CD4-positive, alpha-beta memory T cell (primary cell): ENCODE measurements at regions of chr12 and their contacts with region 1.

Region 1: GRCh38 chr12:9707864-9708808 is 24.8 kb downstream of the CLECL1 start:
- DNase-seq: peak; percentile 72 to 75 (median 74)
- H3K4me3 ChIP-seq: peak overlapping the region; percentile 4 to 29
- H3K4me3 Mint-ChIP-seq: peak overlapping the region; percentile 60 to 82 (median 77)
- H3K27ac ChIP-seq: peak overlapping the region; percentile 66
- H3K27ac Mint-ChIP-seq: peak overlapping the region; percentile 87 to 97 (median 96)
- H3K4me1 ChIP-seq: peaks cover 44% of the 10 kb centered on the region
- H3K4me1 Mint-ChIP-seq: peaks cover 47 to 59% (median 49%) of the 10 kb centered on the region in 4 donors
- H3K27me3 ChIP-seq: no peaks in the 10 kb centered on the region
- H3K27me3 Mint-ChIP-seq: no peaks in the 10 kb centered on the region

Region 2: GRCh38 chr12:9615420-9616136 is 92.6 kb before region 1 on chr12:
- CTCF ChIA-PET with region 1: interaction called, 10 read pairs
- POLR2A ChIA-PET with region 1: interaction called, 14 read pairs
- intact Hi-C with region 1: no loop called
- DNase-seq: peak; percentile 39 to 85 (median 76)
- H3K4me3 ChIP-seq: peak overlapping the region in 1 of 2 donors; percentile 46
- H3K4me3 Mint-ChIP-seq: peak overlapping the region; percentile 80 to 94 (median 88)
- H3K27ac ChIP-seq: peak overlapping the region; percentile 84
- H3K27ac Mint-ChIP-seq: peak overlapping the region; percentile 95 to 100 (median 98)
- H3K4me1 ChIP-seq: peaks cover 63% of the 10 kb centered on the region
- H3K4me1 Mint-ChIP-seq: peaks cover 61 to 97% (median 75%) of the 10 kb centered on the region in 4 donors
- H3K27me3 ChIP-seq: no peaks in the 10 kb centered on the region
- H3K27me3 Mint-ChIP-seq: no peaks in the 10 kb centered on the region

Region 3: GRCh38 chr12:9647825-9648700 is 60.1 kb before region 1 on chr12:
- CTCF ChIA-PET with region 1: interaction called, 21 read pairs
- POLR2A ChIA-PET with region 1: interaction called, 100 read pairs
- intact Hi-C with region 1: loop called (anchors 1 kb)
- DNase-seq: peak; percentile 94 to 96 (median 94)
- H3K4me3 ChIP-seq: peak overlapping the region; percentile 91 to 99
- H3K4me3 Mint-ChIP-seq: peak overlapping the region; percentile 94 to 100 (median 99)
- H3K27ac ChIP-seq: peak overlapping the region; percentile 83
- H3K27ac Mint-ChIP-seq: peak overlapping the region; percentile 85 to 99 (median 97)
- H3K4me1 ChIP-seq: peaks cover 62% of the 10 kb centered on the region
- H3K4me1 Mint-ChIP-seq: peaks cover 39 to 66% (median 50%) of the 10 kb centered on the region in 4 donors
- H3K27me3 ChIP-seq: no peaks in the 10 kb centered on the region
- H3K27me3 Mint-ChIP-seq: no peaks in the 10 kb centered on the region

Region 4: GRCh38 chr12:9667403-9668160 is 40.6 kb before region 1 on chr12:
- CTCF ChIA-PET with region 1: interaction called, 24 read pairs
- POLR2A ChIA-PET with region 1: interaction called, 182 read pairs
- intact Hi-C with region 1: no loop called
- DNase-seq: no peak
- H3K4me3 ChIP-seq: peak overlapping the region in 1 of 2 donors; percentile 11
- H3K4me3 Mint-ChIP-seq: peak overlapping the region; percentile 86 to 95 (median 92)
- H3K27ac ChIP-seq: peak overlapping the region; percentile 79
- H3K27ac Mint-ChIP-seq: peak overlapping the region; percentile 85 to 97 (median 95)
- H3K4me1 ChIP-seq: peaks cover 70% of the 10 kb centered on the region
- H3K4me1 Mint-ChIP-seq: peaks cover 50 to 82% (median 58%) of the 10 kb centered on the region in 4 donors
- H3K27me3 ChIP-seq: no peaks in the 10 kb centered on the region
- H3K27me3 Mint-ChIP-seq: no peaks in the 10 kb centered on the region

Region 5: GRCh38 chr12:9687228-9687627 is 20.9 kb before region 1 on chr12:
- CTCF ChIA-PET with region 1: interaction called, 32 read pairs
- POLR2A ChIA-PET with region 1: interaction called, 182 read pairs
- intact Hi-C with region 1: loop called (anchors 1 kb)
- DNase-seq: peak in 1 of 5 donors; percentile 50
- H3K4me3 ChIP-seq: no peak overlapping the region
- H3K4me3 Mint-ChIP-seq: peak overlapping the region in 5 of 8 donors; percentile 10 to 54 (median 44)
- H3K27ac ChIP-seq: no peak overlapping the region
- H3K27ac Mint-ChIP-seq: peak overlapping the region in 6 of 7 donors; percentile 29 to 83 (median 64)
- H3K4me1 ChIP-seq: peaks cover 73% of the 10 kb centered on the region
- H3K4me1 Mint-ChIP-seq: peaks cover 45 to 72% (median 65%) of the 10 kb centered on the region in 4 donors
- H3K27me3 ChIP-seq: no peaks in the 10 kb centered on the region
- H3K27me3 Mint-ChIP-seq: no peaks in the 10 kb centered on the region

Region 6: GRCh38 chr12:9721394-9722092 is 13.4 kb after region 1 on chr12:
- CTCF ChIA-PET with region 1: interaction called, 37 read pairs
- POLR2A ChIA-PET with region 1: interaction called, 5 read pairs
- intact Hi-C with region 1: no loop called
- DNase-seq: no peak
- H3K4me3 ChIP-seq: no peak overlapping the region
- H3K4me3 Mint-ChIP-seq: no peak overlapping the region
- H3K27ac ChIP-seq: no peak overlapping the region
- H3K27ac Mint-ChIP-seq: peak overlapping the region in 2 of 7 donors; percentile 29 to 40
- H3K4me1 ChIP-seq: no peaks in the 10 kb centered on the region
- H3K4me1 Mint-ChIP-seq: peaks cover 0 to 10% (median 2%) of the 10 kb centered on the region in 4 donors
- H3K27me3 ChIP-seq: no peaks in the 10 kb centered on the region
- H3K27me3 Mint-ChIP-seq: peaks cover 0 to 6% of the 10 kb centered on the region in 2 donors

Region 7: GRCh38 chr12:9827209-9827888 is 119.2 kb after region 1 on chr12 and contains the start of gene KLRF1:
- CTCF ChIA-PET with region 1: no interaction called
- POLR2A ChIA-PET with region 1: no interaction called
- intact Hi-C with region 1: no loop called
- DNase-seq: no peak
- H3K4me3 ChIP-seq: no peak within 1 kb of the TSS
- H3K4me3 Mint-ChIP-seq: peak within 1 kb of the TSS in 1 of 8 donors; percentile 40
- H3K27ac ChIP-seq: no peak within 1 kb of the TSS
- H3K27ac Mint-ChIP-seq: no peak within 1 kb of the TSS
- H3K4me1 ChIP-seq: no peaks in the 10 kb centered on the region
- H3K4me1 Mint-ChIP-seq: peaks cover 0 to 1% (median 0%) of the 10 kb centered on the region in 4 donors
- H3K27me3 ChIP-seq: no peaks in the 10 kb centered on the region
- H3K27me3 Mint-ChIP-seq: peaks cover 2 to 13% of the 10 kb centered on the region in 2 donors
- total RNA-seq, gene KLRF1: 0.28 to 0.49 TPM